ENCODE measurements at regions of chr7 and their contacts with region 1.

Region 1: DNA sequence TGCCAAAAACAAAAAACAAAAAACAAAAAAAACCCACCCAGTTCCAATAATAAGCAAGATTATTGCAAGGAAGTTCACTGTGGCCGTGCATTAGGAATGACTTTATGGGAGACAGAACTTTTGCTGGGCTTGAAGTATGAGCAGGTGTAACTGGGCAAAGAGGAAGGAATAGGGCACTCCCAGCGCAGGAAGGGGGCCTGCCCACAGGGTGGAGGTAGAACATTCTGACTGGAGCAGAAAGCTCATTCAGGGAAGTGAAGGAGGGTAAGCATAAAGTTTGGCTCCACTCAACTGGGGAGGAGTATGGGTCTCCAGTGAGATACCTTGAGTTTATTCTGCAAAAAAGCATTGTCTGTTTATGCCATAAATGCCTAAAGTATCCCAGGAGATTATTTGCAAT is 42.1 kb upstream of the WIPF3 start:
- DNase-seq: peak; percentile 17
- H3K4me3 ChIP-seq: no peak overlapping the region
- H3K27ac ChIP-seq: no peak overlapping the region
- H3K4me1 ChIP-seq: no peaks in the 10 kb centered on the region
- H3K27me3 ChIP-seq: peaks cover 2% of the 10 kb centered on the region
- CTCF ChIP-seq: no peak
- EP300 ChIP-seq: no peak
- POLR2A ChIP-seq: no peak

Region 2: DNA sequence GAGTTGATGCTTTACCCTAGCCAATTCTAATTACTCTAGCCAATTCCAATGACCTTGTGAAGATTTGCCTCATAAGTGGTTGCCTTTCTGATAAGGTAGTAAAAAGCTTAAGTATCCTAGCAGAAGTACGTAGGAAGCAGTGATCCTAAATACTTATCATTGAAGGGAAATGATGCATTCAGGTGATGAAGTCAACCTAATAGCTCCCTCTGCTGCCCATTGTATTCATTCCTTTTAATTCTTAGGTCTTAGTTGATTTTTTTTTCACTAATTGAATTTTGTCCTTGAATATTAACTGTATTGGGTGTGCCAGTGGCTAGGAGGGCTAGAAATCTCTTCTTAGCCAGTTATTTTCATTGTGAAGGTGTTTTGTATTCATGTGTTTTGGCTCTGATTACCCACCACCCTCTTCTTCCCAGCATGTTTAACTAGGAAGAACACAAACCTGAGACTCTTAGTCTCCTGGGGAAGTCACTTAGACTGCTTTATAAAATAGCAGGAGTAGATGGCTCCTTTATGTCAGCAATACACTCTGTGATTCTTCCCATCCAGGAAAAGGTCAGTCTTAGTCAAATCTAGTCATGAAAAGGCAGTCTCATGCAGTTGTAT is 310.3 kb after region 1 on chr7:
- in situ Hi-C with region 1: loop called in 1 of 4 experiments (anchors 25 kb)
- intact Hi-C with region 1: no loop called
- DNase-seq: no peak
- H3K4me3 ChIP-seq: no peak overlapping the region
- H3K27ac ChIP-seq: no peak overlapping the region
- H3K4me1 ChIP-seq: no peaks in the 10 kb centered on the region
- H3K27me3 ChIP-seq: no peaks in the 10 kb centered on the region
- CTCF ChIP-seq: peak; percentile 29 to 42 (median 35)
- EP300 ChIP-seq: no peak
- POLR2A ChIP-seq: no peak

Measured in transverse colon (tissue), 4 donors.